ENCODE measurements at regions of chr3 and their contacts with region 1.

Region 1: GRCh38 chr3:194134757-194135528 is 1.0 kb upstream of the HES1 start:
- DNase-seq: peak; percentile 94
- H3K4me3 ChIP-seq: peak overlapping the region; percentile 54
- H3K27ac ChIP-seq: peak overlapping the region; percentile 89
- H3K4me1 ChIP-seq: no peaks in the 10 kb centered on the region
- H3K27me3 ChIP-seq: no peaks in the 10 kb centered on the region
- CTCF ChIP-seq: no peak

Region 2: GRCh38 chr3:193780810-193781472 is 354.0 kb before region 1 on chr3:
- intact Hi-C with region 1: loop called (anchors 2 kb)
- DNase-seq: peak; percentile 79
- H3K4me3 ChIP-seq: no peak overlapping the region
- H3K27ac ChIP-seq: no peak overlapping the region
- H3K4me1 ChIP-seq: no peaks in the 10 kb centered on the region
- H3K27me3 ChIP-seq: no peaks in the 10 kb centered on the region
- CTCF ChIP-seq: peak; percentile 57

Region 3: GRCh38 chr3:193883551-193883950 is 251.4 kb before region 1 on chr3:
- intact Hi-C with region 1: loop called (anchors 10 kb)
- DNase-seq: no peak
- H3K4me3 ChIP-seq: no peak overlapping the region
- H3K27ac ChIP-seq: no peak overlapping the region
- H3K4me1 ChIP-seq: peaks cover 3% of the 10 kb centered on the region
- H3K27me3 ChIP-seq: no peaks in the 10 kb centered on the region
- CTCF ChIP-seq: no peak

Region 4: GRCh38 chr3:193971261-193971751 is 163.6 kb before region 1 on chr3:
- intact Hi-C with region 1: loop called (anchors 10 kb)
- DNase-seq: peak; percentile 90
- H3K4me3 ChIP-seq: no peak overlapping the region
- H3K27ac ChIP-seq: peak overlapping the region; percentile 61
- H3K4me1 ChIP-seq: no peaks in the 10 kb centered on the region
- H3K27me3 ChIP-seq: no peaks in the 10 kb centered on the region
- CTCF ChIP-seq: no peak

Region 5: GRCh38 chr3:194070634-194071409 is 64.1 kb before region 1 on chr3:
- intact Hi-C with region 1: loop called (anchors 10 kb)
- DNase-seq: peak; percentile 78
- H3K4me3 ChIP-seq: peak overlapping the region; percentile 41
- H3K27ac ChIP-seq: peak overlapping the region; percentile 66
- H3K4me1 ChIP-seq: peaks cover 17% of the 10 kb centered on the region
- H3K27me3 ChIP-seq: no peaks in the 10 kb centered on the region
- CTCF ChIP-seq: no peak

Measured in colonic mucosa (tissue), 4 donors.